ENCODE measurements at regions of chr14 and their contacts with region 1.

Region 1: DNA sequence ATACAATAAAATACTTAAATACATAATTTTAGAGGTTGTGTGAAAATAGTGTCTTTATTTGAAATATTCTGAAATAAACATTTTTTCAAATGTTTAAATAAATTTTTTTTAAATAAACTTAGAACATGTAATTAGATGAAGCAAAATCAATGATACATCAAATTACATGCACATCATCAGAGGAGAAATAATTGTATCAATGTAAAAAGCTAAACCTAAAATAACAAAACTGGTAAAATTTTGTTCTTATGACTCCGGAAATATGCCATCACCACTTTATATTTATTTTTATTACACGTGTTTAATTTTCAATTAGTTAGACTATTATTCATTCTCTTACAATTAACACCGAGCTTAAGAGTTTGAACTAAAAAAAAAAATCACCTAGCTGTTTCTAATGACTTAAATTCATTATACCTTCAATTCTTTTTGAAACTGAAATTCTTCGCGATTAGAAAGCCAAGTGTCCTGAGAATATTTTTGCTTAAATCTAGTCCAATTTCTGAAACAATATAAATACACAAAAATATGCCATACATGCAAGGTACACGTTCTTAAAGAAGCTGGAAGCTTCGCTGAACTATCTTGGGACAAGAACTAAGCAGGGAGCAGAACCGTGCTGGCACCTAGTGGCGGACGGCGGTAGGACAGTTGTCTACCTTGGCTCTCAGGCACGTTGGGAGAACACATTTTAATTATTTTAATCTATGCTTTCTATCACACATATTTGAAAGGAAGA is 230.5 kb downstream of the SLC25A21 start:
- DNase-seq: peak; percentile 27 to 92
- H3K4me3 ChIP-seq: no peak overlapping the region
- H3K27ac ChIP-seq: no peak overlapping the region
- H3K4me1 ChIP-seq: no peaks in the 10 kb centered on the region
- H3K27me3 ChIP-seq: no peaks in the 10 kb centered on the region
- CTCF ChIP-seq: peak; percentile 86 to 93 (median 91)
- EP300 ChIP-seq: no peak
- POLR2A ChIP-seq: no peak
- RAD21 ChIP-seq: peak; percentile 96 to 98

Region 2: GRCh38 chr14:36661756-36662498 is 280.0 kb before region 1 on chr14 and contains the start of gene PAX9:
- CTCF ChIA-PET with region 1: interaction called, 90 read pairs
- POLR2A ChIA-PET with region 1: no interaction called
- DNase-seq: peak; percentile 92 to 96
- H3K4me3 ChIP-seq: peak within 1 kb of the TSS; percentile 25 to 62 (median 38); a peak in 7 of 8 replicates
- H3K27ac ChIP-seq: no peak within 1 kb of the TSS
- H3K4me1 ChIP-seq: peaks cover 4 to 33% (median 22%) of the 10 kb centered on the region in 4 experiments
- H3K27me3 ChIP-seq: peaks cover 91 to 99% (median 94%) of the 10 kb centered on the region in 4 experiments
- CTCF ChIP-seq: no peak
- EP300 ChIP-seq: no peak
- POLR2A ChIP-seq: no peak
- RAD21 ChIP-seq: 0 out of 4 replicates have a peak, but pooled peaks of 1 of the 2 experiments have one; percentile 1
- total RNA-seq, gene PAX9: not detected in 2 replicates

Region 3: DNA sequence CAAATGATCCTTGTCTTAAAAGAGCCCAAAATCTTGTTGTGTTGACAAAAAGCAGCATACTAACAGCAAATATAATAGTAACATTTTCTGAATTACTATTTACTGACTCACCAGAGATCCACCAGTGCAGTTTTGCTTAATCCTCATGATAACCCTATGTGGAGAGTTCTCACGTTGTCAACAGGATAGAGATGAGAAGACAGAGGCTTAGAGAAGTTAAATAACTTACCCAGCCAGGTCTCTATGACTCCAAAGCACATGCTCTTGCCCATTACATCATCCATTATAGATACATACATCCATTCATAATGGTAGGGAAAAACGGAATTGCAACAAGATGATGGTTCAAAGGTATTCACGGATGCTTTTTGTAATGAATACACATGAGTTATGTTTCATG is 168.4 kb before region 1 on chr14:
- CTCF ChIA-PET with region 1: interaction called, 11 read pairs
- POLR2A ChIA-PET with region 1: no interaction called
- DNase-seq: no peak
- H3K4me3 ChIP-seq: no peak overlapping the region
- H3K27ac ChIP-seq: no peak overlapping the region
- H3K4me1 ChIP-seq: peaks cover 0 to 2% (median under 1%) of the 10 kb centered on the region in 4 experiments; a peak in 2 of 7 replicates
- H3K27me3 ChIP-seq: no peaks in the 10 kb centered on the region
- CTCF ChIP-seq: no peak
- EP300 ChIP-seq: no peak
- POLR2A ChIP-seq: no peak
- RAD21 ChIP-seq: no peak

Region 4: DNA sequence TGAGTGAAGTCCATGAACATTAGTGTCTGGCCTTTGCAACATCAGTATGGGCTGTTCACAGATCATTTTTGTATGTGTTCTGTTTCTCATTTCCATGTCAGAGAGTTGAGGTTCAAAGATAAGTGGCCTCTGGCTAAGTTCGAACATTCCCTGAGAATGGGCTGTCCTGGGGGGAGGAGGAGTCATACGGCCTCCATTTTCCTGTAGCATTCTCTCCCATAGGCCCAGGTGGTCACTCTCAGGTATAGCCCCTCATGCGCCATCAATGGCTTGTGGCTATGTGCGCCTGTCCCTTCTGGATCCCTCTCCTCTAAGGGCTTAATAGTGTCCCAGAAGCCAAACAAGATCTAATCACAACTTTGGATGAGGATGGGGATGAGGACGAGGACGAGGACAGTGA is 115.3 kb before region 1 on chr14:
- CTCF ChIA-PET with region 1: no interaction called
- POLR2A ChIA-PET with region 1: no interaction called
- DNase-seq: no peak
- H3K4me3 ChIP-seq: no peak overlapping the region
- H3K27ac ChIP-seq: no peak overlapping the region
- H3K4me1 ChIP-seq: peaks cover 1 to 9% (median 6%) of the 10 kb centered on the region in 4 experiments; a peak in 5 of 7 replicates
- H3K27me3 ChIP-seq: no peaks in the 10 kb centered on the region
- CTCF ChIP-seq: no peak
- EP300 ChIP-seq: no peak
- POLR2A ChIP-seq: no peak
- RAD21 ChIP-seq: no peak

Region 5: GRCh38 chr14:36900846-36901245 is 41.1 kb before region 1 on chr14:
- CTCF ChIA-PET with region 1: no interaction called
- POLR2A ChIA-PET with region 1: no interaction called
- DNase-seq: no peak
- H3K4me3 ChIP-seq: no peak overlapping the region
- H3K27ac ChIP-seq: no peak overlapping the region
- H3K4me1 ChIP-seq: no peaks in the 10 kb centered on the region
- H3K27me3 ChIP-seq: no peaks in the 10 kb centered on the region
- CTCF ChIP-seq: no peak
- EP300 ChIP-seq: no peak
- POLR2A ChIP-seq: no peak
- RAD21 ChIP-seq: no peak

Region 6: GRCh38 chr14:36931796-36932195 is 10.2 kb before region 1 on chr14:
- CTCF ChIA-PET with region 1: interaction called, 22 read pairs
- POLR2A ChIA-PET with region 1: no interaction called
- DNase-seq: no peak
- H3K4me3 ChIP-seq: no peak overlapping the region
- H3K27ac ChIP-seq: no peak overlapping the region
- H3K4me1 ChIP-seq: no peaks in the 10 kb centered on the region
- H3K27me3 ChIP-seq: peaks cover 0 to 1% (median 0%) of the 10 kb centered on the region in 4 experiments; a peak in 1 of 7 replicates
- CTCF ChIP-seq: no peak
- EP300 ChIP-seq: no peak
- POLR2A ChIP-seq: no peak
- RAD21 ChIP-seq: no peak